ENCODE measurements at regions of chr6 and their contacts with region 1.

Region 1: DNA sequence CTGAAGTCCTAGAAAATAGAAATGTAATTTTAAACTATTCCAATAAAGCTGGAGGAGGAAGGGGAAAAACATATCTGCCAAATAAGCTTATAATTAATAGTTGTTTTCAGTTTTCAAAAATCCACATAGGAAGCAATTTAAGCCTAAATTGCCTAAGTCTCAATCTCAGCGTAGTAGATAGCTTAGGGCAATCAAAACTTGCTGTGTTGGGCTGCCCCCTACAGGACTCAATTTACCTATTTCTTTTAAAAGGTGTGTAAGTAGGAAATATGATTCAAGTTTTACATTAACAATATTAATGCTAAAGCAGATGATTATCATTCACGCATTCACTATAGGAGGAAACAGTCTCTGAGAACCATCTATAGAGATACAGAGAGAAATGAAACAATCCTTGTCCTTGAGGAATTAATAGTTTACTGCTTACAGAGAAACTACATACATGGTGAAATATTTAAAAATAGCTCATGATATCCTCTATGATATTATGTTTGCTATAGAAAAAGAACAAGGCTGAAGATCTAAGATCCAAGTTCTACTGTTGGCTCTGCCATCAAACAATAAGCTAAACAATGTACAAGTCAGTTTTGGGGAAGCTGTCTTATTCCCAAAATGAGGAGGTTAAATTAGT is 102.1 kb downstream of the ATG5 start:
- DNase-seq: peak; percentile 52
- ATAC-seq: peak; percentile 91
- H3K4me3 ChIP-seq: no peak overlapping the region
- H3K27ac ChIP-seq: no peak overlapping the region
- H3K4me1 ChIP-seq: peaks cover 14% of the 10 kb centered on the region
- H3K27me3 ChIP-seq: no peaks in the 10 kb centered on the region
- CTCF ChIP-seq: peak; percentile 50 to 79 (median 53); a peak in 4 of 6 replicates
- EP300 ChIP-seq: no peak
- POLR2A ChIP-seq: no peak
- RAD21 ChIP-seq: peak; percentile 97

Region 2: DNA sequence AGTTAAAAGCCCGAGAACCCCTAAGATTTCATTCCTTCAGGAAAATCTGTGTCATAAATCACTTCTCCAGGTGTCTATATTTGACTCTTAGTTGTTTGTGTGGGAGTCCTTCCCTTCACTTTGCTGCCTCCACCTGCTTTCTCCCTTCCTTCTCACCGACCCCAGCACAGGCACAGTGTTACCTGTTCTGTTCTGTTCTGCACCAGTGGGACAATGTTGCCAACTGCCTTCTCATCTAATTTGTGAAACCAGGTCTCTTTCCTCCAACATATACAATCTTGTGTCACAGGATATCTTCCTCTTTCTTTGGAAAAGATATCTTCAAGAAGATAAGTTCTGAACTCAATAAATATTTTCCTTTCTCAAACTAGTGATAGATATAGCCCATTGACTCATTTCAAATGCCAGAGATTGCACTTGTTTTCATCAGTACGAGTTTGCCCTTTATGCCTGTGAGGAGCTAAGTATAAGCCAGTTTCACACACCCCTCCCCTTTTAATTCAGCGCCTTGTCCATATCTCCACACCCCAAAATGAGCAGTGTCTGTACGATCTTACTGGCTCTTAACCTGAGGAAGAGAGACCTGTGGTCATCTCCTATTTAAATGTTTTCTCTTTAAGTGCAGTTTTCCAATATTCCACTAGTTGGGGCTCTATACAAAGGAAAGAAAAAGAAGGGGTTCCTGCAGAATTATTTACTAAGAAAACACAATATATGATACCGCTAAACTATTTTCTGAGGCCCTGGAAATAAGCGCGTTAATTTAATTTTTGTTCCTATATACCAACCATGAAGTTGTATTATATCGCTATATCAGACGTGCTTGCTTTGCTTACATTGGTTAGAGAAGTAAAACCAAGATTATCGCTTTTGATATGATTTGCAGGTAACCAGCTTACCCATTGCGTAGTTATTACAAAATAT is 738.9 kb before region 1 on chr6:
- CTCF ChIA-PET with region 1: interaction called, 40 read pairs
- POLR2A ChIA-PET with region 1: no interaction called
- RAD21 ChIA-PET with region 1: interaction called, 42 read pairs
- SMC1A ChIA-PET with region 1: interaction called, 91 read pairs
- in situ Hi-C with region 1: loop called (anchors 5 kb)
- intact Hi-C with region 1: loop called (anchors 1 kb)
- DNase-seq: no peak
- ATAC-seq: peak; percentile 64
- H3K4me3 ChIP-seq: no peak overlapping the region
- H3K27ac ChIP-seq: peak overlapping the region; percentile 8; the same call in 1 of the 2 replicates
- H3K4me1 ChIP-seq: peaks cover 50% of the 10 kb centered on the region
- H3K27me3 ChIP-seq: no peaks in the 10 kb centered on the region
- CTCF ChIP-seq: peak; percentile 80 to 84 (median 82)
- EP300 ChIP-seq: peak in 1 of 2 experiments; percentile 50; a peak in 2 of 4 replicates
- POLR2A ChIP-seq: no peak
- RAD21 ChIP-seq: peak; percentile 96

Region 3: GRCh38 chr6:106097411-106098231 is 125.8 kb before region 1 on chr6:
- CTCF ChIA-PET with region 1: interaction called, 113 read pairs
- POLR2A ChIA-PET with region 1: interaction called, 4 read pairs
- RAD21 ChIA-PET with region 1: interaction called, 57 read pairs
- SMC1A ChIA-PET with region 1: interaction called, 57 read pairs
- in situ Hi-C with region 1: loop called (anchors 10 kb)
- intact Hi-C with region 1: no loop called
- DNase-seq: peak; percentile 78
- ATAC-seq: peak; percentile 68
- H3K4me3 ChIP-seq: peak overlapping the region; percentile 72
- H3K27ac ChIP-seq: peak overlapping the region; percentile 80
- H3K4me1 ChIP-seq: peaks cover 34% of the 10 kb centered on the region
- H3K27me3 ChIP-seq: no peaks in the 10 kb centered on the region
- CTCF ChIP-seq: no peak
- EP300 ChIP-seq: peak; percentile 65 to 68
- POLR2A ChIP-seq: no peak
- RAD21 ChIP-seq: no peak

Region 4: GRCh38 chr6:106141441-106142237 is 81.8 kb before region 1 on chr6:
- CTCF ChIA-PET with region 1: interaction called, 61 read pairs
- POLR2A ChIA-PET with region 1: no interaction called
- RAD21 ChIA-PET with region 1: interaction called, 51 read pairs
- SMC1A ChIA-PET with region 1: interaction called, 52 read pairs
- in situ Hi-C with region 1: no loop called
- intact Hi-C with region 1: no loop called
- DNase-seq: peak; percentile 85
- ATAC-seq: peak; percentile 76
- H3K4me3 ChIP-seq: no peak overlapping the region
- H3K27ac ChIP-seq: peak overlapping the region; percentile 91
- H3K4me1 ChIP-seq: peaks cover 63% of the 10 kb centered on the region
- H3K27me3 ChIP-seq: no peaks in the 10 kb centered on the region
- CTCF ChIP-seq: no peak
- EP300 ChIP-seq: peak in 1 of 2 experiments; percentile 77; a peak in 2 of 4 replicates
- POLR2A ChIP-seq: no peak
- RAD21 ChIP-seq: peak; percentile 46

Region 5: DNA sequence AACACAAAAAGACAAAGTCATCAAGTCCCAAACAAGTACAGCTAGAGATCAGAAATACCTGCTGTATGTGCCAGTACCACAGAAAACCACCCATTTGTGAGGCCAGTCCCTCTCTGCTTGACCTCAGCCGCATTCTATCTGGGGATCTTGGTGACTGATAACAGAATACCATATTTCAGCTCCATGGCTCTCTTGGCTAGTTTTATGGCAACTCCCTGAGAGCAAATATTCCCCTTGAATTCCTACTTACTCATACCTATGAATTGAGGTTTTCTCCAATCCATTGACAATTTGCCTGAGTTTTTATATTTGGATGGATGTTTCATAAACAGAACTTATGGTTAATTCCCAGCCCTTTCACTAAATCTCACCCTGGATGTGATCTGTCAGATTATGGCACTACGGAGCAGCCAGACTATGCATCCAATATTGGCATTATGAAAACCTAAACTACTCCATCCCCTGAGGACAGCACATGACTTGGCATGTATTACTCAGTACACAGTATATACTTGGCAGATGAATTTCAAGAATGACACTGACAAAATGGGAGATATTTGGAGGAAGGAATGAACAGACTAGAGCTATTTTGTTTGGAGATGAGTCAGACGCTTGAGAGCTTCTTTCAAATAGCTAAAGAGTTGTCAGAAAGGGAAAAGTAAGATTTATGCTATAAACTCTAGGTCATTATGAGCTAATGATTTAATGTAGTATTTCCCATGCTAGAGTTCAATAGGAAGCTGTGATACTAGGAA is 41.6 kb before region 1 on chr6:
- CTCF ChIA-PET with region 1: interaction called, 21 read pairs
- POLR2A ChIA-PET with region 1: interaction called, 3 read pairs
- RAD21 ChIA-PET with region 1: interaction called, 9 read pairs
- SMC1A ChIA-PET with region 1: interaction called, 61 read pairs
- in situ Hi-C with region 1: no loop called
- intact Hi-C with region 1: no loop called
- DNase-seq: peak; percentile 40
- ATAC-seq: peak; percentile 57
- H3K4me3 ChIP-seq: no peak overlapping the region
- H3K27ac ChIP-seq: peak overlapping the region; percentile 74
- H3K4me1 ChIP-seq: peaks cover 45% of the 10 kb centered on the region
- H3K27me3 ChIP-seq: no peaks in the 10 kb centered on the region
- CTCF ChIP-seq: no peak
- EP300 ChIP-seq: no peak
- POLR2A ChIP-seq: no peak
- RAD21 ChIP-seq: no peak

Region 6: DNA sequence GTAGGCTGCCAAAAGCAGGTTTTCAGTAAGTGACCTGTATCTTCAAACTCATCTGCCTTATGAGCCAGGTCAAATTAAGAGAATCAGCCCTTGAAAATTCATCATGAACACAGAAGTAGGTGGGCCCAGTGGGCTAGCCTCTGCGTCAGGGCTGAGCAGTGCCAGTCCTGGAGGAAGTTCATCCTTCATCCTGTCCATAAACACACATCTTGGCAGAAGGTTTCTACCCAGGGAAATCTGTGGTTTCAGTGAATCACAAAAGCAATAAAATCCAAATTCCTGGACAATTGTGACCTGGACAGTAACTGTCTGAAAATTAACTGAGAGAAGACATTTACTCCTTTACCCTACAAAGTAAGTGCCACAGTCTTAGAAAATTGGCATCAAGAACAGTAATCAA is 29.8 kb after region 1 on chr6:
- CTCF ChIA-PET with region 1: interaction called, 8 read pairs
- POLR2A ChIA-PET with region 1: no interaction called
- RAD21 ChIA-PET with region 1: interaction called, 3 read pairs
- SMC1A ChIA-PET with region 1: interaction called, 13 read pairs
- in situ Hi-C with region 1: no loop called
- intact Hi-C with region 1: no loop called
- DNase-seq: no peak
- ATAC-seq: no peak
- H3K4me3 ChIP-seq: no peak overlapping the region
- H3K27ac ChIP-seq: no peak overlapping the region
- H3K4me1 ChIP-seq: no peaks in the 10 kb centered on the region
- H3K27me3 ChIP-seq: no peaks in the 10 kb centered on the region
- CTCF ChIP-seq: no peak
- EP300 ChIP-seq: no peak
- POLR2A ChIP-seq: no peak
- RAD21 ChIP-seq: no peak

Region 7: GRCh38 chr6:106300944-106301343 is 77.5 kb after region 1 on chr6:
- CTCF ChIA-PET with region 1: interaction called, 37 read pairs
- POLR2A ChIA-PET with region 1: no interaction called
- RAD21 ChIA-PET with region 1: interaction called, 26 read pairs
- SMC1A ChIA-PET with region 1: interaction called, 14 read pairs
- in situ Hi-C with region 1: no loop called
- intact Hi-C with region 1: no loop called
- DNase-seq: peak; percentile 12
- ATAC-seq: peak; percentile 61
- H3K4me3 ChIP-seq: no peak overlapping the region
- H3K27ac ChIP-seq: no peak overlapping the region
- H3K4me1 ChIP-seq: no peaks in the 10 kb centered on the region
- H3K27me3 ChIP-seq: no peaks in the 10 kb centered on the region
- CTCF ChIP-seq: peak; percentile 23 to 56 (median 41); a peak in 4 of 6 replicates
- EP300 ChIP-seq: no peak
- POLR2A ChIP-seq: no peak
- RAD21 ChIP-seq: peak; percentile 68

Region 8: GRCh38 chr6:106411643-106412200 is 188.3 kb after region 1 on chr6:
- CTCF ChIA-PET with region 1: no interaction called
- POLR2A ChIA-PET with region 1: no interaction called
- RAD21 ChIA-PET with region 1: no interaction called
- SMC1A ChIA-PET with region 1: no interaction called
- in situ Hi-C with region 1: no loop called
- intact Hi-C with region 1: no loop called
- DNase-seq: no peak
- ATAC-seq: no peak
- H3K4me3 ChIP-seq: no peak overlapping the region
- H3K27ac ChIP-seq: no peak overlapping the region
- H3K4me1 ChIP-seq: no peaks in the 10 kb centered on the region
- H3K27me3 ChIP-seq: no peaks in the 10 kb centered on the region
- CTCF ChIP-seq: no peak
- EP300 ChIP-seq: no peak
- POLR2A ChIP-seq: no peak
- RAD21 ChIP-seq: no peak

Measured in GM12878 (cell line).